ENCODE measurements at regions of chr1 and their contacts with region 1.

Region 1: DNA sequence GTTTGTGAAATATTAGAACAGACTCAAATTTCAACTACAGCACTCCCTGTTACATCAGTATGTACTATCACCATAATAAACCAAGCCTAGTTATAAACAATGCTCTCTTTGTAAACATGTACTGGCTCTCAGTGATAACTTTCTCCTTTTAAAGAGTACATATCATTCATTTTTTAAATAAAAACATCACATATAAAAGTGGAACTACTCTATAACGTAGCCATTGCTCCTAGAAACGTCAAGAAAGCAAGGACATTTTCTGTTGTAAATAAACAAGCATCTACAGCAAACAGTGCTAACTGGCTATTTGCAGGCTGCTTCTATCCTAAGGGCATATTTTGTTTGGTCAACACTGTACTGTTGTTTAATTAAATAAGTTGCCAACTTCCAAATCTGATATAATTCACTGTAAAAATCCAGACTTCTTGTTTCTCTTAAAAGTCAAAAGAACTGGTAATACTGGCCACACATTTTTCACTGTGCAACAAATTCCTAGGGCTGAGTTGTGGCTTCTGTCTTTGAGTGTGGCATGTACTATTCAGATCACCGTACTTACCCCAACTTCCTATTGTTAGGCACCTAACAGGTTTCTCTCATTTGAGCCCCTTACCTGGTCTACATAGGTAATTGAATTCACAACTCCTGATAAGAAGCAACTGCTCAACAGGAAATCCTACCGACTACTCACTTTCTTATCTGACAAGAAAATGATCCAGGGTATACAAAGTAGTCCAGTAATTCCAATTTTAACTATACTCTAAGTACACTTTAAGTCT is 111.9 kb downstream of the DENND1B start:
- DNase-seq: no peak
- ATAC-seq: no peak
- H3K4me3 ChIP-seq: no peak overlapping the region
- H3K4me3 Mint-ChIP-seq: no peak overlapping the region
- H3K27ac ChIP-seq: no peak overlapping the region
- H3K27ac Mint-ChIP-seq: peak overlapping the region in 4 of 9 donors; percentile 9 to 62 (median 21)
- H3K4me1 ChIP-seq: peaks cover 0 to 6% of the 10 kb centered on the region in 2 donors
- H3K4me1 Mint-ChIP-seq: peaks cover 0 to 25% (median 14%) of the 10 kb centered on the region in 7 donors
- H3K27me3 ChIP-seq: no peaks in the 10 kb centered on the region
- H3K27me3 Mint-ChIP-seq: no peaks in the 10 kb centered on the region

Region 2: GRCh38 chr1:197649188-197649587 is 14.2 kb before region 1 on chr1:
- CTCF ChIA-PET with region 1: no interaction called
- POLR2A ChIA-PET with region 1: interaction called, 4 read pairs
- intact Hi-C with region 1: loop called in 1 of 2 experiments (anchors 2 kb)
- DNase-seq: no peak
- ATAC-seq: no peak
- H3K4me3 ChIP-seq: no peak overlapping the region
- H3K4me3 Mint-ChIP-seq: no peak overlapping the region
- H3K27ac ChIP-seq: no peak overlapping the region
- H3K27ac Mint-ChIP-seq: no peak overlapping the region
- H3K4me1 ChIP-seq: no peaks in the 10 kb centered on the region
- H3K4me1 Mint-ChIP-seq: peaks cover 0 to 12% (median 0%) of the 10 kb centered on the region in 7 donors
- H3K27me3 ChIP-seq: no peaks in the 10 kb centered on the region
- H3K27me3 Mint-ChIP-seq: no peaks in the 10 kb centered on the region

Measured in naive thymus-derived CD4-positive, alpha-beta T cell (primary cell).